ENCODE measurements at regions of chr16 and their contacts with region 1.

Region 1: GRCh38 chr16:27326738-27327585 is 13.2 kb downstream of the IL4R start:
- DNase-seq: peak; percentile 63 to 73
- ATAC-seq: peak; percentile 36 to 90 (median 72)
- H3K4me3 ChIP-seq: peak overlapping the region in 2 of 10 donors; percentile 14 to 35
- H3K27ac ChIP-seq: peak overlapping the region; percentile 50 to 100 (median 86)
- H3K4me1 ChIP-seq: peaks cover 9 to 99% (median 47%) of the 10 kb centered on the region in 9 donors
- H3K27me3 ChIP-seq: no peaks in the 10 kb centered on the region
- CTCF ChIP-seq: peak in 2 of 9 donors; percentile 4 to 9

Region 2: GRCh38 chr16:27027971-27028370 is 299.0 kb before region 1 on chr16:
- intact Hi-C with region 1: no loop called
- DNase-seq: no peak
- ATAC-seq: no peak
- H3K4me3 ChIP-seq: no peak overlapping the region
- H3K27ac ChIP-seq: no peak overlapping the region
- H3K4me1 ChIP-seq: no peaks in the 10 kb centered on the region
- H3K27me3 ChIP-seq: peaks cover 0 to 8% (median 0%) of the 10 kb centered on the region in 7 donors
- CTCF ChIP-seq: no peak

Region 3: GRCh38 chr16:27367461-27368357 is 40.7 kb after region 1 on chr16:
- intact Hi-C with region 1: loop called in 1 of 10 experiments (anchors 5 kb)
- DNase-seq: peak; percentile 82
- ATAC-seq: peak; percentile 87 to 94 (median 90)
- H3K4me3 ChIP-seq: peak overlapping the region in 7 of 10 donors; percentile 20 to 41 (median 32)
- H3K27ac ChIP-seq: peak overlapping the region in 9 of 10 donors; percentile 38 to 87 (median 53)
- H3K4me1 ChIP-seq: peaks cover 0 to 36% (median 13%) of the 10 kb centered on the region in 9 donors
- H3K27me3 ChIP-seq: no peaks in the 10 kb centered on the region
- CTCF ChIP-seq: peak; percentile 77 to 92 (median 86)

Measured in heart right ventricle (tissue), 16 donors.